HEK293 (cell line): ENCODE measurements at regions of chr6 and their contacts with region 1.

Region 1: DNA sequence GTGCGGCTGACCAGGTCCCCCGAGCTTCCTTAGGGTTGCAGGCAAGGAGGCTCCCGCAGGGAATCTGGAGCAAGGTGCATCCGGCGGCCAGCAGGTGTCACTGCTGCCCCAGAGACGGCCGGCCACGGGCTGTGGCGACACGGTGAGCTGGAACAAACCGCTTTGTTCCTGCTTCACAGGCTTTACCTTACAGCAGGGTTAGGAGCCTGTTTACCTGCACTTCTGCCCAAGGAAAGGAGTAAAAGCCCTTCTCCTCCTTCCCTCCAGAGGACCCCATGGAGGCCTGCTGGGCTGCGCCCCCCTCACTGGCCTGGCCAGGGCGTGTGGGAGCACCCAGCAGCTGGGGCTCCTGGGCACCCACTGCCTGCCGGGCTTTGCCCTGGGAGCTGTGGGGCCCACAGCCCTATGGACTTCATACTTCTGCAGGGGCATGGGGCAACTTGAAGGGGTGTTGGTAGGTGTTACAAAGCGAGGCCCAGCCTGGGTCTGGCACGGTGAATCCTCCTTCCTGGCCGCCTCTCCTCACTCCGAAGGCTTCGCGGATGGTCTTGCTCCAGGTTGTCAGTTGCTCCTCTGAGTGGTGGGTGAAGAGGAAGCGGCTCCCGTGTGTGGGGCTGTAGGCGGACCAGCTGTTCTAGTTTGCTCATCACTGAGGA is 88.4 kb downstream of the CDC5L start:
- H3K4me3 ChIP-seq: no peak overlapping the region
- H3K27ac ChIP-seq: peak overlapping the region; percentile 0; the same call in 1 of the 2 replicates
- H3K4me1 ChIP-seq: no peaks in the 10 kb centered on the region
- CTCF ChIP-seq: peak; percentile 97

Region 2: GRCh38 chr6:44297063-44298038 is 178.6 kb before region 1 on chr6:
- CTCF ChIA-PET with region 1: no interaction called
- POLR2A ChIA-PET with region 1: no interaction called
- H3K4me3 ChIP-seq: peak overlapping the region; percentile 44
- H3K27ac ChIP-seq: no peak overlapping the region
- H3K4me1 ChIP-seq: no peaks in the 10 kb centered on the region; the same call in 1 of the 2 replicates
- CTCF ChIP-seq: no peak

Region 3: DNA sequence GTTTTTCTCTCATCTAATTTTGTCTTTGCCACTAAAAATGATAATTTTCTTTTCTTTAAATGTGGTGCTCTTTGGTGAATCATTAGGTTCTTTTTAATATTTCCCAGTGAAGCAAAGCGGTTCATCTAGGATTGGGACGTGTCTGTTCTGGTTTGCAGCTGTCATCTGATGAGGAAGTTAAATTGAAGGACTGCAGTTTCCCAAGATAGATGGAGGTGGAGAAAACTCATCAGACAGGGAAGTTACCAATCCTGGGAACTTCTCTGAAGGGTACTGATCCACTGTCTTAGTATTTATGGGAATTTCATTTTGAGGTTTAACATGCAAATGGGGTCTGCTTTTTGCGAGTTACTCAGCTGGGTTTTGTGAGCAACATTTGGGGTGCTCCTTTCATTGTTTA is 160.4 kb before region 1 on chr6:
- CTCF ChIA-PET with region 1: no interaction called
- POLR2A ChIA-PET with region 1: no interaction called
- H3K4me3 ChIP-seq: no peak overlapping the region
- H3K27ac ChIP-seq: no peak overlapping the region
- H3K4me1 ChIP-seq: peaks cover 5% of the 10 kb centered on the region; the same call in 1 of the 2 replicates
- CTCF ChIP-seq: no peak

Region 4: DNA sequence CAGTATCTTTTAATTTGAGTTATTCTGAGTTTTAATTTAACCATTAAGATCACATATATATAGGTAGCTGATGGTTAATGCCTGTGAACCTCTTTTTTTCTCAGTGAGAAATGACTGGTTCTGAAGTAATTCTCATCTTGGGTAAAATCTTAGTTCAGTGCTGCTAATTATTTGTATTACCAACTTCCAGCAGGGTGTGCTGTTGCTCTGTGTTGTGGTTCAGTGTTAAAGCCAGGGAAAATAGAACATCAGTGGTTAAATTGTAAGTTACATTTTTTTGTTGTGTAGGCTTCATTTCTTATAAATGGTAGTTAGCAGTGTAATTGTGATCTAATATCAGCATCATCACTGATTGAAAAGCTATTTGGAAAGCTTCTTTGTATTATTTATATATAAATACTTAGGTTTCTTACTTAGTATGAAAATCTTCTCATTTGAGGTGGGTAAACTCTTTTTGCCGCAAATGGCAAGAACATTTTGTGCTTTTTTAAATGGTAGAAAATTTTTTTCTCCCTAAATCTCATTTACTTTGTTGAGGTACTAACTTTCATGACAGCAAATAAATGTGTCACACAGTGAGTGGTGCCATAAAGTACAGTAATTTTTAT is 44.7 kb before region 1 on chr6:
- CTCF ChIA-PET with region 1: interaction called, 20 read pairs
- POLR2A ChIA-PET with region 1: no interaction called
- H3K4me3 ChIP-seq: no peak overlapping the region
- H3K27ac ChIP-seq: no peak overlapping the region
- H3K4me1 ChIP-seq: peaks cover 22% of the 10 kb centered on the region
- CTCF ChIP-seq: peak; percentile 55; the same call in 1 of the 2 replicates

Region 5: GRCh38 chr6:44456070-44456965 is 19.6 kb before region 1 on chr6:
- CTCF ChIA-PET with region 1: interaction called, 87 read pairs
- POLR2A ChIA-PET with region 1: no interaction called
- H3K4me3 ChIP-seq: peak overlapping the region; percentile 24
- H3K27ac ChIP-seq: no peak overlapping the region; the same call in 1 of the 2 replicates
- H3K4me1 ChIP-seq: peaks cover 12% of the 10 kb centered on the region
- CTCF ChIP-seq: peak; percentile 77

Region 6: DNA sequence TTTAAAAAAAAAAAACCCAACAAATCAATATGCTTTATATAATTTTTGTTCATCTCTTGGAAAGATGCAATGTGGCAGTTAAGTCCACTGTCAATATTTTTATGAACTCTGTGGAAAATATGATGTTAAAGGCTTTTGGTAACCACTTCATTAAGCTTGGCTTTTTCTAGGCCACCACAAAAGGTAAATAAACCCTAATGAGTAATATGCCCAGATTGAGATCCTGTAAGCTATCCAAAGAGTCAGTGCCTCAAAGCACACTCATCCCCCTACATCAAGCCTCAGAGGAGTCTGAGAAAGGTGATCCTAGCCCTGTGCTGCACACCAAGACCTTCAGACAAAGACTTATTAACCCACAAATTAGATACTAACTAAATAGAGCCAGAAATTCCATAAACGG is 32.7 kb after region 1 on chr6:
- CTCF ChIA-PET with region 1: interaction called, 18 read pairs
- POLR2A ChIA-PET with region 1: no interaction called
- H3K4me3 ChIP-seq: no peak overlapping the region
- H3K27ac ChIP-seq: no peak overlapping the region
- H3K4me1 ChIP-seq: no peaks in the 10 kb centered on the region
- CTCF ChIP-seq: no peak

Region 7: GRCh38 chr6:44593539-44593944 is 117.6 kb after region 1 on chr6:
- CTCF ChIA-PET with region 1: interaction called, 48 read pairs
- POLR2A ChIA-PET with region 1: no interaction called
- H3K4me3 ChIP-seq: no peak overlapping the region
- H3K27ac ChIP-seq: no peak overlapping the region
- H3K4me1 ChIP-seq: no peaks in the 10 kb centered on the region
- CTCF ChIP-seq: peak; percentile 41; the same call in 1 of the 2 replicates

Region 8: DNA sequence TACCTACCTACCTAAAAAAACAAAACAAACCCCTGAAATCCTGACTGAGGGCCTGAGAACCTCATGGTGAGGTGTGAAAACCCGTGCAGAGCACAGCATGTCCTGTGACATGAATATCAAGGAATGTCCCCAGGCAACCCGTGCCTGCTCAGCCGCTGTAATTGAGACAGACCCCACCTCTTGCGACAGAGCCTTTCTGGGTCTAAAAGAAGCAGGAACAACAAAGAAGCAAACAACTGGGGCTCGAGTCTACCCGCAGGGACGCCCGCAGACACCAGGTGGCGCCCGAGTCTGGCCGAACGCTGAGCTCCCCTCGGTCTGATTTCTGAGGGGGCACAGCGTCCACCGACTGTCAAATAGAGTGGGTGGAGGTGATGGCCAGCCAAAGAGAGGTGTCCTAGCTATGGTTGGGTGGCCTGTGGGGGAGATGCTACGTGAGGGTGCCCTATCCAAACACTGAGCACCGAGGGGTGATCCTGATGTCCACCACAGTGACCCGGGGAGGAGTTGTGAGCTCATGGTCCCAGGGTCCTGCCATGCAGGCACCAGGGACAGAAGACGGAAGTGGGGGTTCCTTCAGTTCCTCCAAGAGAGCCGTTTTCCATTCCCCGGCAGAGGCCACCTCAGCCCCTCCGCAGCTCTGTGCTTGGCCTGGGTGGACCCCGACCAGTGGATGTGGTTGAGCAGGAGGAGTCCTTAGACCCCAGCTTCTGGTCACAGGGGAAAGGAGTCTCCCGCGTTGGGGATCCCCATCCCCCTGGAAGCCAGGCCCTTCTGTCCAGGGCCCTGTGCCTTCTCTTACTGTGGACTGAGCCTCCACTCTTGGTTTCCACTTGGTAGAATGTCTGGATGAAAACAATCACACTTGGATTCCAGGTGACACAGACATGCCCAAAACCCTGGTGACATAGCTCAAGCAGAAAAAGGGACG is 179.8 kb after region 1 on chr6:
- CTCF ChIA-PET with region 1: interaction called, 25 read pairs
- POLR2A ChIA-PET with region 1: no interaction called
- H3K4me3 ChIP-seq: no peak overlapping the region
- H3K27ac ChIP-seq: no peak overlapping the region; the same call in 1 of the 2 replicates
- H3K4me1 ChIP-seq: peaks cover 12% of the 10 kb centered on the region
- CTCF ChIP-seq: peak; percentile 88

Region 9: GRCh38 chr6:44762496-44762895 is 286.6 kb after region 1 on chr6:
- CTCF ChIA-PET with region 1: no interaction called
- POLR2A ChIA-PET with region 1: no interaction called
- H3K4me3 ChIP-seq: no peak overlapping the region
- H3K27ac ChIP-seq: no peak overlapping the region
- H3K4me1 ChIP-seq: no peaks in the 10 kb centered on the region
- CTCF ChIP-seq: no peak

Region 10: DNA sequence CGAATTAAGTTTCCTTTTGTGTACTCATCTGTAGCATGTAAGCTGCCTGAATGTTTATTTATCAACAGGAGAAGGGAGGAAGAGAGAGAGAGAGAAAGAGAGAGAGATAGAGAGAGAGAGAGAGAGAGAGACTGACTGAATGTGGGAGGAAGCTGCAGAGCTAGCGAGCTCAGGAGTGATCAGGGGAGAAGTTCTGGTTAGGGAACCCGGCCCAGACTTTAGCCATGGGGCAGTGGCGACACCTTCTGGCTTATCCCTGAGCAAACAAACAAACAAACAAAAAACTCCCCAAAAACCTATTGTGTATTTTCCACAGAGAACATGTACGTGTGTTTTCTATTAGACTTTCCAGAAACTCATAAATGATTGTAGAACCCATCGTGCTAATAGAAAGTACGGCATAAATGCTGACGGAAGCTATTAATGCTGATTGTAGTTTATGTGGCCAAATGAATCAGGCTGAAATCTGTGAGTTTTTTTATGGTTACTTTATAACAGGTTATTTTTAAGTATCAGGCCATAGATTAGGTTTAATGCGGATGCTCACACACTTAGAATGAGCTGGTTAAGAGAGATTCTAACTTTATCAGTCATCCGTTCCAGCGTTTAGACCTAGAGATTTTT is 1446.9 kb after region 1 on chr6:
- CTCF ChIA-PET with region 1: interaction called, 34 read pairs
- POLR2A ChIA-PET with region 1: no interaction called
- H3K4me3 ChIP-seq: no peak overlapping the region
- H3K27ac ChIP-seq: no peak overlapping the region
- H3K4me1 ChIP-seq: no peaks in the 10 kb centered on the region
- CTCF ChIP-seq: peak; percentile 84